ENCODE measurements at regions of chr19 and their contacts with region 1.

Region 1: DNA sequence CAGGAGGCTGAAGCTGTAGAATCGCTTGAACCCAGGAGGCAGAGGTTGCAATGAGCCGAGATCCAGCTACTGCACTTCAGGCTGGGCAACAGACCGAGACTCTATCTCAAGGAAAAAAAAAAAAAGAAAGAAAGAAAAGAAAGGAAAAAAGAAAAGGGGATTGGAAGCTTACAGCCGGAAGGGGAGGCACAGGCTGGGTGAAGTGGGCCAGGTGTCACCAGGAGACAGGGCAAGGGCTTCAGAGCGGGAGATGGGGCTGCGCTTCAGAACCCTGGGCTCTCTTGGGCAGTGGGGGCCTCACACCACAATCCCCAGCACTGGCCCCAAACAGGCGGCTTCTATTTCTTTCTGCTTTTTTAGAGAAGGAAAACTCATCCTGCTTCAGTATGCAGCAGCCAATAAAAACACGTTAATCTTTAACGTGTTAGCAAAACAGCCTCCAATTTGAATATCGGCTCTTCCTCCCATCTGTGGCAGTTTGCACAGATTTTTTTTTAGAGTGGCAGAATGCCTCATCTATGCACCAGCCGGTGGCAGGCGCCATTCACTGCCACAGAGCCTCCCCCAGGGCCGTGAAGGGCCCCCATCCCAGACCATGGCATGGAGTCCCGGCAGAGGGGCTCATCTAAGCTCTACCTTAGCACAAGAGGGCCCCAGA is 46.6 kb upstream of the C19orf12 start:
- H3K4me3 ChIP-seq: no peak overlapping the region
- H3K27ac ChIP-seq: no peak overlapping the region
- H3K4me1 ChIP-seq: no peaks in the 10 kb centered on the region
- CTCF ChIP-seq: no peak

Region 2: GRCh38 chr19:29735800-29736199 is 25.9 kb before region 1 on chr19:
- CTCF ChIA-PET with region 1: interaction called, 62 read pairs
- POLR2A ChIA-PET with region 1: no interaction called
- H3K4me3 ChIP-seq: no peak overlapping the region
- H3K27ac ChIP-seq: no peak overlapping the region
- H3K4me1 ChIP-seq: no peaks in the 10 kb centered on the region
- CTCF ChIP-seq: no peak

Region 3: DNA sequence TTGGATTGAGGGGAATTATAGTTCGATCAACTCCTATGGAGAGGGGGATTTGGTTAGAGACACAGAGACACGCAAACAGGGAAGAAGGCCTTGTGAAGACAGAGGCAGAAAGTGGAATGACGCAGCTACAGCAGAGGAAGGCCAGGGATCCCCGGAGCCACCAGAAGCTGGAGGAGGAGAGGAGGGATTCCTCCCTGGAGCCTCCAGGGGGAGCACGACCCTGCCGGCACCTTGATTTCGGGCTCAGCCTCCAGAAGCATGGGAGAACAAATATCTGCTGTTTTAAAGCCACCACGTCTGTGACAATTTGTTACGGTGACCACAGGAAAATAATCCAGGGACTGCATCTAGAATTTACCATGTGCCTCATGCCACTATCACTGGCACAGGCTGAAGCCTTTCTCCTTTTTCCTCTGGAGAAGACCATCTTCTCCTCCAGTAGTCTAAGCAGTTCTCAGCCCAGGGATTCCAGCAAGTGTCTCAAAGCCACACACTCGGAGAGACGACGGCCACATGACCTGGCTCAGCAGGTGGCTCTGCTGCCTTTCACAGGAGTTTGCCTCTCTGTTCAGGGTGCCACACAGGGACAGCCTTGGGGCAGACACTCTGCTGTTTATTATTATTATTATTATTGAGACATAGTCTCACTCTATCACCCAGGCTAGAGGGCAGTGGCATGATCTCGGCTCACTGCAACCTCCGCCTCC is 10.2 kb after region 1 on chr19:
- CTCF ChIA-PET with region 1: interaction called, 138 read pairs
- POLR2A ChIA-PET with region 1: no interaction called
- H3K4me3 ChIP-seq: no peak overlapping the region
- H3K27ac ChIP-seq: no peak overlapping the region
- H3K4me1 ChIP-seq: peaks cover 3% of the 10 kb centered on the region; the same call in 1 of the 2 replicates
- CTCF ChIP-seq: peak; percentile 96

Region 4: GRCh38 chr19:29785955-29786589 is 24.4 kb after region 1 on chr19:
- CTCF ChIA-PET with region 1: interaction called, 10 read pairs
- POLR2A ChIA-PET with region 1: no interaction called
- H3K4me3 ChIP-seq: no peak overlapping the region
- H3K27ac ChIP-seq: no peak overlapping the region
- H3K4me1 ChIP-seq: no peaks in the 10 kb centered on the region
- CTCF ChIP-seq: peak; percentile 64; the same call in 1 of the 2 replicates

Region 5: DNA sequence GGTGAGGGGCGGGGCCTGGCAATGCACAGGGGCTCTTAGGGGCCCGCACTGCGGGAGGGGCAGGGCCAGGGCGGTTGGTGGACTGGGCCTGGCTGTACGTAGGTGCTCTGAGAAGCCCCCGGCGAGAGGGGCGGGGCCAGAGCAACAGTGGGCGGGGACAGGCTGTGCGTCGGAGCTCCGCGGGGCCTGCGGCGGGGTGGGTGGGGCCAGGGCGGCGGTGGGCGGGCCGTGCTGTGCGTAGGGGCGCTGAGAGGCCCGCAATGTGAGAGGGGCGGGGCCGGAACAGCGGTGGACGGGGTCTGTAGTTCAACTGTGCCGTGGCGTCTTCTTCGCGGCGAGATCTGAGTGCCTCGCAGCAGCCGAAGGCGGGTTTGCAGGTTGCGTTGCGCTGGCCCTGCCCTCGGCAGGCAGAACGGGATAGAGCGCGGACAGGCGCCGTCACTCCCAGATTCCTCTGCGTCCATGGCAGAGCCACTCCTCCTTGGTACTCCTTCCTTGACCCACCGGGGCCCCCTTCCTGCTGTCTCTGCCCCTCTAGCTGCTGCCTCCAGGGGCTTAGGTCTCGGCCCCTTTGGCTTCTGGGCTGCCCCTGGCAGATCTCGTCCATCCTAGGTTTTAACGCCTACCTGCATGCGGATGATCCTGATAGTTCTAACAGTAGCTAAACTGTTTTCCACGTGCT is 83.3 kb after region 1 on chr19:
- CTCF ChIA-PET with region 1: interaction called, 11 read pairs
- POLR2A ChIA-PET with region 1: interaction called, 3 read pairs
- H3K4me3 ChIP-seq: peak overlapping the region; percentile 42
- H3K27ac ChIP-seq: peak overlapping the region; percentile 76
- H3K4me1 ChIP-seq: peaks cover 16% of the 10 kb centered on the region
- CTCF ChIP-seq: peak; percentile 80

Region 6: GRCh38 chr19:29908963-29909944 is 147.6 kb after region 1 on chr19:
- CTCF ChIA-PET with region 1: no interaction called
- POLR2A ChIA-PET with region 1: no interaction called
- H3K4me3 ChIP-seq: no peak overlapping the region
- H3K27ac ChIP-seq: no peak overlapping the region
- H3K4me1 ChIP-seq: 0 out of 2 replicates have a peak, but pooled peaks cover 2% of the 10 kb centered on the region
- CTCF ChIP-seq: no peak